ENCODE measurements at regions of chr7 and their contacts with region 1.

Region 1: DNA sequence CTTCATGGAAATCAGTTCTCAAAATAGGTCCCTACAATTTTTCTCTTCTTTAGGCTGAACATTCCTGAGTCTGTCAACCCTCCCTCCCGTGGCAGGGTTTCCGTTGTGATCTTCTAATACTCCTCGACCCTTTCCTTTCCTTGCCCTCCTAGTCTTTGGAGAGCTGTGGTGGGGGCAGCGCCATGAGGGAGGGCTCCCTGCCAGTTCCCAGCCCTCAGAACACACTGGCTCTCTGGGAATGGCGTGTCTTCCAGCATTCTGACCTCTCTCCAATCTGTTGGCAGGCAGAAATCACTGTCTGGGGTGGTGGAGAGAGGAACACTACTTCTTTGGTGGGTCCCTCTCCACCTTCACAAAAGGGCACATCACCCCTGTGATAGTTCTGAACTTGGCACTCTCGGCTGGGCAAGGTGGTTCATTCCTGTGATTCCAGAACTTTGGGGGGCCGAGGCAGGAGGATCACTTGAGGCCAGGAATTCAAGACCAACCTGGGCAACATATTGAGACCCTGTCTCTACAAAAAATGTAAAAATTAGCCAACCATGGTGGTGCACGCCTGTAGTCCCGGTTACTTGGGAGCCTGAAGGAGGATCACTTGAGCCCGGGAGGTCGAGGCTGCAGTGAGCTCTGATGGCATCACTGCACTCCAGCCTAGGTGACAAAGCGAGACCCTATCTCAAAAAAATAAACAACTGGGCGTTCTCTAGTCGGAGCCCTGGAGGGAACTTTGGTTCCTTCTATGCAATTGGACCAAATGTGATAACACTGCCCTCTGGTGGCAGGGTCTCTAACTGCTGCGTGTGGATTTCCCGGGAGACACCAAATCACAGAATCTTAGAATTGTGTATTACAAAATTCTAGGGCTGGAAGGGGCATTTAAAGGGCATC is 13.1 kb upstream of the ARPC1A start:
- DNase-seq: peak; percentile 80
- H3K4me3 ChIP-seq: no peak overlapping the region
- H3K27ac ChIP-seq: no peak overlapping the region
- H3K4me1 ChIP-seq: peaks cover 0 to 4% (median 0%) of the 10 kb centered on the region in 4 donors
- H3K27me3 ChIP-seq: no peaks in the 10 kb centered on the region
- CTCF ChIP-seq: peak; percentile 90 to 96 (median 91)
- EP300 ChIP-seq: no peak
- POLR2A ChIP-seq: no peak

Region 2: GRCh38 chr7:99040104-99040958 is 272.2 kb before region 1 on chr7:
- in situ Hi-C with region 1: loop called (anchors 5 to 10 kb)
- intact Hi-C with region 1: loop called (anchors 2 kb)
- DNase-seq: peak; percentile 85
- H3K4me3 ChIP-seq: no peak overlapping the region
- H3K27ac ChIP-seq: peak overlapping the region; percentile 54 to 77 (median 71)
- H3K4me1 ChIP-seq: peaks cover 10 to 33% (median 20%) of the 10 kb centered on the region in 4 donors
- H3K27me3 ChIP-seq: no peaks in the 10 kb centered on the region
- CTCF ChIP-seq: peak; percentile 72 to 89 (median 79)
- EP300 ChIP-seq: no peak
- POLR2A ChIP-seq: no peak

Region 3: GRCh38 chr7:99143853-99144672 is 168.5 kb before region 1 on chr7 and contains the start of gene SMURF1:
- in situ Hi-C with region 1: no loop called
- intact Hi-C with region 1: no loop called
- DNase-seq: peak; percentile 74
- H3K4me3 ChIP-seq: peak within 1 kb of the TSS; percentile 97 to 100 (median 100)
- H3K27ac ChIP-seq: peak within 1 kb of the TSS; percentile 99 to 100 (median 100)
- H3K4me1 ChIP-seq: peaks cover 5 to 44% (median 21%) of the 10 kb centered on the region in 4 donors
- H3K27me3 ChIP-seq: no peaks in the 10 kb centered on the region
- CTCF ChIP-seq: no peak
- EP300 ChIP-seq: no peak
- POLR2A ChIP-seq: peak; percentile 70
- total RNA-seq, gene SMURF1: 25.3 to 47.5 (median 36.5) TPM

Region 4: GRCh38 chr7:99171731-99172130 is 140.8 kb before region 1 on chr7:
- in situ Hi-C with region 1: loop called in 1 of 4 experiments (anchors 25 kb)
- intact Hi-C with region 1: no loop called
- DNase-seq: no peak
- H3K4me3 ChIP-seq: no peak overlapping the region
- H3K27ac ChIP-seq: no peak overlapping the region
- H3K4me1 ChIP-seq: no peaks in the 10 kb centered on the region
- H3K27me3 ChIP-seq: no peaks in the 10 kb centered on the region
- CTCF ChIP-seq: no peak
- EP300 ChIP-seq: no peak
- POLR2A ChIP-seq: no peak